ENCODE measurements at regions of chrX and their contacts with region 1.

Region 1: GRCh38 chrX:111168314-111168713 is 72.3 kb downstream of the PAK3 start:
- DNase-seq: no peak
- ATAC-seq: no peak

Region 2: DNA sequence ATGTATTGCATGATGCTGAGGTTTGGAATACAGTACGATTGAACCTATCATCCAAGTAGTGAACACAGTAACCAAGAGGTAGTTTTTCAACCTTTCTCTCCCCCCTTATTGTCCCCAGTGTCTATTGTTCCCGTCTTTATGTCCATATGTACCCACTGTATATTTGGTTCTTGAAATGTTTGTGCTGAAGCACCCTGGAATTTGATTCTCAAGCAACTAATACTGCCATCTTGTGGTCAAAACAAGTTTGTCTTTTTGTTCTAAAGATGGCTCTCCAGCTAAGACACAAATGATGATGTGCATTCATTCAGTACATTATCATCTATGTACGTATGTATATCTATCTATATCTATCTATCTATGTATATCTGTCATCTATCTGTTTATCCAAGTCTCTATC is 277.2 kb after region 1 on chrX:
- intact Hi-C with region 1: loop called in 1 of 2 experiments (anchors 10 kb)
- DNase-seq: no peak
- ATAC-seq: no peak